ENCODE measurements at regions of chr2 and their contacts with region 1.

Region 1: DNA sequence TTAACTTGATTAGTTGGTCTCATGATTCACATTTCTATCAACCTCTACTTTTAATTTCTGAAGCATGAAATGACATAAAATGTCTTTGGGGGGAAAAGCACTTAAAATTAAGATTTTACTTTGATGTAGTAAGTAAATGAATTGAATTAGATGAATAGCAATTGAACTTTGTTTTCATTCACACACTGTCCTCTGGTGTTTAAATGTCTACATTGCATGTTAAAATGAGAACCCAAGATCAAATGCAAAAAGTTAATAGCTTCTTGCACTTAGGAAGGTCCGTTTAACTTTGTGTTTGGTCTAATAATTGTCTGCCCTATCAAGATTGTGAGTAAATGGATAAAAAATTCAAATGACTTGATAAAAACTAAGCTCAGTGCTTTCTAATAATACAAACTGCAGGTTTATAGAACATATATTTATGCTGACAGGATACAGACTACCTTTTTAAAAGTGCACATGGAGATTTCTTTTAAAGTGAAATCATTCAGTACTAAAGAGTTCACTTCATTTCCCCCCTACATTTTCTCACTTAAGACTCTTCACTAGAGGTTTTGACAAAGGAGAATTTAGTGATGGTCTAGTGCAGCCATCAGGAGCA is 156.2 kb upstream of the NABP1 start:
- DNase-seq: no peak
- ATAC-seq: no peak

Region 2: GRCh38 chr2:191165176-191165643 is 356.5 kb before region 1 on chr2:
- intact Hi-C with region 1: loop called (anchors 5 kb)
- DNase-seq: no peak
- ATAC-seq: peak; percentile 78 to 84

Region 3: DNA sequence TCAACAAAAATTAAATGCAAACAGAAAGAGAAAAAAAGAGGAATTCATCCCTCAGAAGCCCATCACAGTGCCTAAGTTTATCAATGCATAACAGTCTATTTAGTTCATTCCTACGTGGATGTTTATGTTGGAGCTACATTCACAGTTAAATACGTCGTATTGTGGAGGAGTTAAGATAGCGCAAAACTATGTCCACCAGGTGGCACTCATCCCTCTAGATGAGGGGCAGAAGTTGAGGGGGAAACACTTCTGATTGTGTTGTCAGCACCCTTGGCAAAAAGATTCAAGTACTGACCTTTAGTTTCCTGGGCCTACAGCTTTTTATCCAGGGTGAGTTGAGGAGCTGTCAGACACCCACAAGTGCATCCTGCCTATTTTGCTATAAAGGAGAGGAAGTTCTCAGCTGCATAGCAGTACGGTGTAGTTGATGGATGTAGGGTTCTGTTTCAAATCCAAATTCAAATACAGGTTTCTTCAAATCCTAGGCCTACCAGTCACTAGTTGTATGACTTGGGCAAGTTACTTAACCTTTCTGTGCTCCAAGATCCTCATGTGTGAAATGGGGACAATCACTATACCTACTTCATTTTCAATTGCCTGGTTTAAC is 303.3 kb before region 1 on chr2:
- intact Hi-C with region 1: loop called in 1 of 2 experiments (anchors 5 kb)
- DNase-seq: peak; percentile 42
- ATAC-seq: peak; percentile 39 to 69

Region 4: DNA sequence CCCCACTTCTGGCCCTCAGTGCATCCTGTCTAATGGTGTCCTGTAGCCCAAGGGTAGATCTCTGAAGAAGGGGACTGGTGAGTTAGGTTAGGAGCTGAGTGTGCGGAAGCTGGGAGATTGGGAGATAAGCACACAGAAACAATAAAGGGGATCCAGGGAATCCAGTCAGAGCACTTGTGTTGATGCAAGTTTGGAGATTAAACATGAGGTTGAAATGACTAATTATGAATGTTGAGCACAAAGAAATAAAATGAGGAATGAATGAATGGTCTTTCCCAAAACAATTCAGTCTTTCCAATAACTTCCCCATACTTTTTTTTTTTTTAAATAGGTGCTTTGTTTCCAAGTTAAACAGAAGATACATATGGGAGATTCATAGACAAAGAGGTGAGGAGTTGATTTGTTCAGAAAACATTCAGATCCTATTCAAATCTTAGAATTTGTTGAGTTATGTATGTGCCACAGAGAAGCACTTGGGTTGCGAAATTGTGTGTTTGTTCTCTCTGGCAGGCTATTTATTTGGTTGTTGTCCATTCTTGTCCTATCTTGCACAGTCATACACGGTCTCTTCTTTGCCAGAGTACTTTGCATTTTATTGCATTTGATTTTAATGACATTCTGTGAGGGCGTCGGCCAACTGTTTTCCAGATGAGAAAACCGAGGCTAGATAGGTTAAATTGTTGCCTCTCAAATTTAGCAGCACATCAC is 124.6 kb after region 1 on chr2:
- intact Hi-C with region 1: no loop called
- DNase-seq: no peak
- ATAC-seq: no peak